Dorsolateral prefrontal cortex (tissue), 120 donors: ENCODE measurements at regions of chr3 and their contacts with region 1.

Region 1: DNA sequence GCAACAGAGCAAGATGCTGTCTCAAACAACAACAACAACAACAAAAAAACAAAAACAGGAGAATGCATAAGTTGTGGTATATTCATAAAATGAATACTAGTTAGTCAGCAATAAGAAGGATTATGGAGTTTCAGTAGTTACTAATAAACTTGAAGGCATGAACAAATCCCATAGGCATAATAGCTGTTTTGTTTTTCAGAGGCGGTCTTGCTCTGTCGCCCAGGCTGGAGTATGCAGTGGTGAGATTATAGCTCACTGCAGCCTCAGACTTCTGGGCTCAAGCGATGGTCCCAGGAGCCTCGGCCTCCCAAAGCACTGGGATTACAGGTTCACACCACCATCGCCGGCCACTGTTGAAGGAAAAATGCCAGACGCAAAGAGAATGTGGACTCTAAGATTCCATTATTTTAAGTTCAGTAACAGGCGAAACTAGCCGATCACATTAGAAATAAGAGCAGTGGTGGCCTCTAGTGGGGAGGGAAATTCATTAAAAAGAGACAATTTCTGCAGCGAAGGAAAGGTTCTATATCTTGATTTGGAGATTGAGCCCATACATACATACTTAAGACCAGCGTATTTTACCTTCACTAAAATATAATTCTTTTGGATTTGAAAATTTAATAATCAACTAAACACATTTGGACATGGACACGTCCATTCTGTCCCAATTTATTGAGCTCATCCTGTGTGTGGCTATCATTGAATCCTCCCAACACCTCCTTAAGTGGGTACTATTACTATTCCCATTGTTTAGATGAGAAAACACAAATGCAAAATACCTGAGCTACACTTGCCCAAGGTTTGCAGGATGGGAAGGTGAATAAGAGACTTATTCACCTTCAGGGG is 27.4 kb upstream of the HDAC11 start:
- DNase-seq: peak in 6 of 10 donors; percentile 30 to 59 (median 54)
- H3K4me3 ChIP-seq: peak overlapping the region in 58 of 59 donors; percentile 35 to 88 (median 62)
- H3K27ac ChIP-seq: peak overlapping the region; percentile 85 to 100 (median 97)
- H3K27me3 ChIP-seq: no peaks in the 10 kb centered on the region
- CTCF ChIP-seq: peak; percentile 62 to 90 (median 79)

Region 2: DNA sequence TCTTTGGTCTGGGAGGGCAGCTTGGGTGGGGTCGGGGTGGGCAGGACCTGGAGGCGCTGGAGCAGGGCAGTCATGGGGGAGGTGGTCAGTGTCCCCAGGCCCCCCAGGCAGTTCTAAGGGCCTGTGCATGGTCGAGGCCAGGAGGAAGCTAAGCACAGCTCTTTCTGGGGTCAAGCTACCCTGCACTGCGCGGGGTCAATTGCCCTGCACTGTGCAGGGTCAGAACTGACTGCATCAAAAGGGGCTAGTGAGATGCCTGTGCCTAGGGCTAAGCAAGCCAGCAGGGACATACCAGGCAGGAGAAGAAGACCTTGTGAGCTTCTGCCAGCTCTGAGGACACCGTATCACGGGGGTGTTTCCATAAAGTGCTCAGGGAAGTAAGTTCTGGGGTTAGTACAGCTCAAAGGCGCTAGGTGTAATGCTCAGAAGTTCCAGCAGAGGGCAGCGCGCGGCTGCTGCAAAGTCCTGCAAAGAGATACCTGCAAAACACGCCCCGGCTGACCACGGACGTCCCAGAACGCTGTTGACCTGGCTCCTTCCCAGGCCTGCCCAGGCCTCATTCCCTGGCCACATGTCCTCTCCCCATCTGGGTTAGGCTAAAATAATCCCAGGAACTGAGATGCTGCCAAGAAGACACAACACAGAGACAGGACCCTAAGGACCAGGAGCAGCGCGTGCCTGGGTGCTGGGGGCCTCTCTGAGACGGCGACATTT is 360.7 kb before region 1 on chr3:
- intact Hi-C with region 1: loop called (anchors 2 kb)
- DNase-seq: peak; percentile 80 to 92 (median 88)
- H3K4me3 ChIP-seq: peak overlapping the region in 15 of 59 donors; percentile 6 to 31 (median 22)
- H3K27ac ChIP-seq: peak overlapping the region in 14 of 59 donors; percentile 12 to 62 (median 32)
- H3K27me3 ChIP-seq: no peaks in the 10 kb centered on the region
- CTCF ChIP-seq: peak; percentile 81 to 99 (median 98)

Region 3: GRCh38 chr3:13294442-13295351 is 158.0 kb before region 1 on chr3:
- intact Hi-C with region 1: loop called in 1 of 2 experiments (anchors 5 kb)
- DNase-seq: peak in 3 of 10 donors; percentile 4 to 18 (median 14)
- H3K4me3 ChIP-seq: no peak overlapping the region
- H3K27ac ChIP-seq: no peak overlapping the region
- H3K27me3 ChIP-seq: no peaks in the 10 kb centered on the region
- CTCF ChIP-seq: no peak

Region 4: DNA sequence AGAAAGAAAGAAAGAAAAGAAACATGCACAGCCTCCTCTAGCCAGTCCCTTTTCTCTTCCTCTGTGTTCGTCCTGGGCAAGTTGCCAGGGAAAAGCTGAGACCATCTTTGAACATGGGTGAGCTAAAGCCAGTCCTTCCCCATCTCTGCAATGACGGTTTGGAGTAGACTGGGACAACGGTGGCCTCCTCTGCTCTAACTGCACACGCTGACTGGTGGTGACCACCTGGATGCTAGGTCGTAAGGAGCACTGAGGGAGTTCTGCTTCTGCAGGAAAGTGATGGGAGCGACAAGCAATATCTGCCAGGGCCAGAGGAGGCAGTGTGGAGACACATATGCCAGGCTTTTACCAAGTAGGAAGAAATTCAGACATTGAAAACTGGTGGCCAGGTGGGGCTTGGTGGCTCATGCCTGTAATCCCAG is 144.3 kb before region 1 on chr3:
- intact Hi-C with region 1: loop called in 1 of 2 experiments (anchors 10 kb)
- DNase-seq: peak in 8 of 10 donors; percentile 18 to 73 (median 58)
- H3K4me3 ChIP-seq: peak overlapping the region in 20 of 59 donors; percentile 6 to 44 (median 30)
- H3K27ac ChIP-seq: peak overlapping the region in 1 of 59 donors; percentile 7
- H3K27me3 ChIP-seq: no peaks in the 10 kb centered on the region
- CTCF ChIP-seq: peak in 54 of 56 donors; percentile 31 to 78 (median 63)

Region 5: DNA sequence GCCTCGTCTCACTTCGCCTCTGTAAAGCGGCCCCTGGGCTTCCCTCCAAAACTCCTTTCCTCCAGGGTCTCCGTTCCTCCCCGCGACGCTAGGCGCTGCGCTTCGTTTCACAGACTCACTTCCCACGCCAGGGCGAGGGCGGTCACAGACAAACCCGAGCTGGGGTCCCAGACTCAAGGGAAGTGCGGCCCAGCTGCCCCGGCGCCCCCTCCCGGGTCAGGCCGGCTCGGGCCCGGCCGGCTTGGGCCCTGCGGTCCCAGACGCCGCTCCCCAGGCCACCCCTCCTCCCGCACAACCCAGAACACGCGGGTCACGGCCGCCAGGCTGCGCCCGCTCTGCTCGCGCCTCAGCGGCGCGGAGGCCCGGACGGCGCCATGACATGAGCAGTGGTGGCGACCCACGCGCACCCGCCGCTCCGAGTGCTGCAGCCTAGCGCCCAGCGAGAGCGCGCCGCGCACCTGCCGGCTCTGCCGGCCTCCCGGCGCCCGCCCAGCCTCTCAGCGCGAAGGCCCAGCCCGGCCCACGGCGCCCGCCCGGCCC is 33.1 kb before region 1 on chr3:
- intact Hi-C with region 1: loop called in 1 of 2 experiments (anchors 5 kb)
- DNase-seq: peak; percentile 31 to 78 (median 56)
- H3K4me3 ChIP-seq: peak overlapping the region; percentile 45 to 81 (median 69)
- H3K27ac ChIP-seq: peak overlapping the region in 57 of 59 donors; percentile 45 to 91 (median 78)
- H3K27me3 ChIP-seq: no peaks in the 10 kb centered on the region
- CTCF ChIP-seq: peak in 34 of 56 donors; percentile 3 to 49 (median 32)

Region 6: GRCh38 chr3:13479581-13480339 is 27.0 kb after region 1 on chr3 and contains the start of gene HDAC11:
- intact Hi-C with region 1: loop called in 1 of 2 experiments (anchors 2 kb)
- DNase-seq: peak; percentile 98 to 100 (median 99)
- H3K4me3 ChIP-seq: peak within 1 kb of the TSS; percentile 72 to 97 (median 82)
- H3K27ac ChIP-seq: peak within 1 kb of the TSS; percentile 91 to 100 (median 98)
- H3K27me3 ChIP-seq: no peaks in the 10 kb centered on the region
- CTCF ChIP-seq: peak; percentile 33 to 76 (median 60)
- total RNA-seq, gene HDAC11: 48.3 to 174 (median 79.7) TPM